ENCODE measurements at regions of chr2 and their contacts with region 1.

Region 1: DNA sequence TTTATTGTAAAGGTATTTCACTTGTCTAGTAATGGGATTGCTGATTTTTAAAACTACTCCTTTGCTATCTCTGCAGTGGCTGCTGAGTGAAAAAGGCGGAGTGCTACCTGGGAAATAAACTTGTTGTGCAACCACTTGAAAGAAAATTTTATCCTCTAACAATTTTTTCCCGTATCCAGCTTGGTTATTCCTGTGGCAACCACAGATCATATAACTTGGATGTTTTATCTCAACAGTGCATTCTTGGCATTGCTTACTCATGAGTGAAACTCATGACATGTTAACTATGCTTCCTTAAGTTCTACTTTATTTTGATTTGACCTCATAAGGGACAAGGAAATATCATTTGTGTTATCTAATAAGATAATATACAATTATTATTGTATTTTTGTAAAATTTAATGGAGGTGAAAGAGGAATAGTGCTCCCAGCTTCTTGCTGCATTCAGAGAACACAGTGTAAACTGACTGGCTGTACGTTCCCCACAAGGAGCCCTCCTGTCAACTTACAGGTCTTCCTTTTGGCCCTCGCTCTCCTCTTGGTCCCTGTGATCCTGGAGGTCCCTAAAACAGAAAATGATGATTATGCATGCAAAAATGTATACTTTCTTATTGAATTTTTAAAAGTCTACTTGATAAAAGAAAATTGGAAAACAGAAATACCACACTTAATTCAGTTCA is 82.7 kb downstream of the COL5A2 start:
- DNase-seq: peak; percentile 12
- H3K4me3 Mint-ChIP-seq: no peak overlapping the region
- H3K27ac Mint-ChIP-seq: peak overlapping the region; percentile 19
- H3K4me1 Mint-ChIP-seq: peaks cover 20% of the 10 kb centered on the region
- H3K27me3 Mint-ChIP-seq: no peaks in the 10 kb centered on the region
- CTCF ChIP-seq: no peak

Region 2: GRCh38 chr2:188524519-188525113 is 572.3 kb before region 1 on chr2:
- CTCF ChIA-PET with region 1: no interaction called
- intact Hi-C with region 1: loop called (anchors 5 kb)
- DNase-seq: peak; percentile 51
- H3K4me3 Mint-ChIP-seq: no peak overlapping the region
- H3K27ac Mint-ChIP-seq: no peak overlapping the region
- H3K4me1 Mint-ChIP-seq: peaks cover 4% of the 10 kb centered on the region
- H3K27me3 Mint-ChIP-seq: no peaks in the 10 kb centered on the region
- CTCF ChIP-seq: peak; percentile 62

Region 3: DNA sequence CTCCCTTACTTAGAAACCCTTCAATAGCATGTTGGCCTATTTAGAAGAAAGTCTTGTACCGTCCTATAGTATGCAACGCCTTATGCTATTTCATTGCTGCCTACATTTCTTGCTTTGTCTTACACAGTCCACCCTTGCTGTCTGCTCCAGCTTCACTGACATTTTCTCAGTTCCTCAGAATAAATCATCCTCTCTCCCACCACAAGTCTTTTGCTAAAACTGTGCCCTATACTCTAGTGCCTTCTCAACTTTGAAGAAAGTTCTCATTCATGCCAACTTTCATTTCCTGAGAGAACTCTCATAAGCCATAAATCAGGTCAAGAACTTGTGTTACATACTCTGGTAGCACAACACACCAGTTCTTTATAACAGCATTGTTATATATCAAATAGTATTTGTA is 177.1 kb before region 1 on chr2:
- CTCF ChIA-PET with region 1: no interaction called
- intact Hi-C with region 1: no loop called
- DNase-seq: no peak
- H3K4me3 Mint-ChIP-seq: no peak overlapping the region
- H3K27ac Mint-ChIP-seq: no peak overlapping the region
- H3K4me1 Mint-ChIP-seq: no peaks in the 10 kb centered on the region
- H3K27me3 Mint-ChIP-seq: no peaks in the 10 kb centered on the region
- CTCF ChIP-seq: no peak

Region 4: GRCh38 chr2:189142893-189143759 is 46.2 kb after region 1 on chr2:
- CTCF ChIA-PET with region 1: interaction called, 5 read pairs
- intact Hi-C with region 1: loop called (anchors 5 kb)
- DNase-seq: peak; percentile 63
- H3K4me3 Mint-ChIP-seq: no peak overlapping the region
- H3K27ac Mint-ChIP-seq: no peak overlapping the region
- H3K4me1 Mint-ChIP-seq: no peaks in the 10 kb centered on the region
- H3K27me3 Mint-ChIP-seq: no peaks in the 10 kb centered on the region
- CTCF ChIP-seq: peak; percentile 94

Region 5: DNA sequence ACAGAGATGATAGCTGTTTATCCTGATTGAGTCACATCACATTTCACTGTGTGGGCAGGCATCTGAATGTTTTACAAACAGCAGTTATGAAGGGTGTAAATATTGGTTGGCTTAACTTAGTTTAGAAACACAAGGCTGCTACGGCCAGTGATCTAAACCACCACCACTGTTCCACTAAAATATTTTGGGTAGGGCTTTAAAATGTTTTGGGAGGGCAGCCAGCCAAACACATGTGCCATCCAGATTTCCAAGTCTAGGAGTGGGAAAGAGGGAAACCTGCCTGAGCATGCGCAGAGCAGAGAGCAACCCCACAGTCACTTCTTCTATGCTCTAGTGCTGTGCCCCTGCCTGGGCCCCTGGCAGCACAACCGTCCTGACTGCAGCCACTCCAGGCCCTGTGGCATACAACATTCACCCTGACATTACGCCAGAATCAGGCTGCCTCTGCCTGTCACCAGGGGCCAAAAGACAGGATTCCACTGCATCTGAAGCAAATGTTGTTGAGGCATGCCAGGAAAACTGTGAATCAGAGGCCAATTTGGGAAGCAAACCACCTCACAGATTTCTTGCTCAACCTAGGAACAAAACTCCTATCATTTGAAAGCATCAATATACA is 157.5 kb after region 1 on chr2:
- CTCF ChIA-PET with region 1: no interaction called
- intact Hi-C with region 1: no loop called
- DNase-seq: no peak
- H3K4me3 Mint-ChIP-seq: no peak overlapping the region
- H3K27ac Mint-ChIP-seq: no peak overlapping the region
- H3K4me1 Mint-ChIP-seq: peaks cover 7% of the 10 kb centered on the region
- H3K27me3 Mint-ChIP-seq: no peaks in the 10 kb centered on the region
- CTCF ChIP-seq: no peak

Measured in Calu3 (cell line).